ENCODE measurements at regions of chr5 and their contacts with region 1.

Region 1: GRCh38 chr5:154467655-154468354 is 10.2 kb downstream of the HAND1 start:
- DNase-seq: peak; percentile 86
- CTCF ChIP-seq: peak; percentile 89

Region 2: DNA sequence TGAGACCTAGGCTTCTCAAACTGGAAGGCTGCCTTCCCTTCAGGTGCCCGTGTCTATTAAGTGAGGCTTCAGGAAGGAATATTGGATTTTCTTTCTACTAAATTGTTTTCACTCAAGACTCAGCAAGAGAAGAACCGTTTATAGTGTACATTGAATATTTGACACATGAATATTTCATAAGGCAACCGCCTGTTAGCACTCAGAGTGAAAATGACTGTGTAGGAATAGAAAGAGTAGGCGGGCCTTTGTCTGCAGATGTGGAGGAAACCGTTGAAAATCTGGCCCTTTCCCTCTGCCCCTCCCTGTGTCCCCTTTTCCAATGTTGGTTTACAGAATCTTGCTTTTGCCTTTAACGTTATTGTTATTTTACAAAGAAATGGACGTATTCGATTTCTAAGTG is 15.8 kb before region 1 on chr5:
- CTCF ChIA-PET with region 1: interaction called, 38 read pairs
- POLR2A ChIA-PET with region 1: no interaction called
- DNase-seq: no peak
- CTCF ChIP-seq: no peak

Region 3: DNA sequence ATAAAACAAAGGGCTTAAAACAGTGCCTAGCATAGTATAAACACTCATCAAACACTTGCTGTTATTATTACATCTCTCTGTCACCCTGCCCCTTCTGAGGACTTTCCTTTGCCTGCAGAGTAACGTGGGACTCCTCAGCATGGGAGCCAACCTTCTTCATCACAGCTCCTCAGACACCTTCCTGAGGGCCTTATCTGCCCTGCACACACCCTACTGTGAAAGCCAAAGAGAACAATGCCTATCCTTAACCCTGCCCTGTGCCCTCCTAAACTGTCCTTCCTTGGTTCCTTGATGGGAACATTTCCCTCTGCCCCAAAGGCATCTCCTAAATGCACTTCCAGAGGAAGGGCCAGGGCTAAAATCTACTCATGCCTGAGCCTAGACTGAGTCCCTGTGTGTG is 30.8 kb after region 1 on chr5:
- CTCF ChIA-PET with region 1: interaction called, 19 read pairs
- POLR2A ChIA-PET with region 1: no interaction called
- DNase-seq: no peak
- CTCF ChIP-seq: no peak

Region 4: DNA sequence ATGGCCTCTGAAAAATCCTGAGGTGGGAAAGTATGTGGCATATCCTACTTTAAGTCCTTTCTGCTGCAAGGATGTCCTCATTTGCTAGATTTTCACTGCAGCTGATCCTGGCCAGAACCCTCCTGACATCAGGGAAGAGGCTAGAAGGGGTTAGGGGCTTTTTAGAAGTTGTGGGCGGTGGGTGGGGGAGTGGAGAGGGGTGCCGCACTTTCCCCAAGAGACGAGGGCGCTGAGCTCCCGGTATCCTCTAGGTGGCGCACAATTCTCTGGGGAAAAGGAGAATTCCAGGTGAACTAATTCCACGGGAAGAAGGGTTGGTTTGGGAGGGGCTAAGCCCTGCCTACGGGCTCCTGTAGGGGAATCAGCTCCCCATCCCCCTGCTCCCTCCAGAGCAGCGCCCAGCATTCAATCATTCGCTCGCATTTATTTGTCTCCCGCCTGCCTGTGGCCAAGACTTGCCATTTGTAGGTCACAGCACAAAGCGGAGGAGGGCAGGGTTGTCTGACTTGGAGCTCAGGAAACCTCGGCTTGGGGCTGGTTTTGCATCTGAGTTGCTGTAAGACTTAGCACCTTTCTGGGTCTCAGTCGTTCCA is 53.2 kb after region 1 on chr5:
- CTCF ChIA-PET with region 1: interaction called, 14 read pairs
- POLR2A ChIA-PET with region 1: no interaction called
- DNase-seq: peak; percentile 62
- CTCF ChIP-seq: peak; percentile 68

Region 5: GRCh38 chr5:154610321-154611154 is 142.7 kb after region 1 on chr5:
- CTCF ChIA-PET with region 1: interaction called, 165 read pairs
- POLR2A ChIA-PET with region 1: no interaction called
- DNase-seq: peak; percentile 92
- CTCF ChIP-seq: peak; percentile 97